Breast epithelium (tissue), 4 donors: ENCODE measurements at regions of chr9 and their contacts with region 1.

Region 1: GRCh38 chr9:119273984-119274665 is 95.1 kb downstream of the BRINP1 start:
- DNase-seq: no peak
- H3K4me3 ChIP-seq: no peak overlapping the region
- H3K27ac ChIP-seq: peak overlapping the region; percentile 8 to 52
- H3K4me1 ChIP-seq: peaks cover 0 to 8% of the 10 kb centered on the region in 2 donors
- H3K27me3 ChIP-seq: no peaks in the 10 kb centered on the region
- CTCF ChIP-seq: no peak
- POLR2A ChIP-seq: no peak

Region 2: DNA sequence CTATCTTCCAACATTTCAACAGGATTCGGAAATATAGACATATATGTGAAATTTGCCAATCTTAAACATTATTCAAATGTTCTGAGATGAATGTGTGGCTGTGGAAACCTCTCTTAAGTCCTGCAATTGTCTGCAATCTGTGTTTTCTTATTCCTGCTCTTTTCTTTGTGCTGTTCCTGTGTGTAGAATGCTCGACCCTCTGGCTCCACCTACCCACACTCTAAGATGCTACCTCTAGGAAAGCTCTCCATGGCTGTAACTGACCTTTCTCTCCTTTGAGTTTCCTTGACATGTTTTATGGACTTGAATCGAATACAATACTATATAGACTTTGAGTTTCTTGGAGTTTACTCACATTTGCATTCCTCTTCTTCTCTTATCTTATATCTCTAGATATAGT is 1738.7 kb before region 1 on chr9:
- intact Hi-C with region 1: loop called (anchors 10 kb)
- DNase-seq: no peak
- H3K4me3 ChIP-seq: no peak overlapping the region
- H3K27ac ChIP-seq: no peak overlapping the region
- H3K4me1 ChIP-seq: no peaks in the 10 kb centered on the region
- H3K27me3 ChIP-seq: no peaks in the 10 kb centered on the region
- CTCF ChIP-seq: no peak
- POLR2A ChIP-seq: no peak

Region 3: DNA sequence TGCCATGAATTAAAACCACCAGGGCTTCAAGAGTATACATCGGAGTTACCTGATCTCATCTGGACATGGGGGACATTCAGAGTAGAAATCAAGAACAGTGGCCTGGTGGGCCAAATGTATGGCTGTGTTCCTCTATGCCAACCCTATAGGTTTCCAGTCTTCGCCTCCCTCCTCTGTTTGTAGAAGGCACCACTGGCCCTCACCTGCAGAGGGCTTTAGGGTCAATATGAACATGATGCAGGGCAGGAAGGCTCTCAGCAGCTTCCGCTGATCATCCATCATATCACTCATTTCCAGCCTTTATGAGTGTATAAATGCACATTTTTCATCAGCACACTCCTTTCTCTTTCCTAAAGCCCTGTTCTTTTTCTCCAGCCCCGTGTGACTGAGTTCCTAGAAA is 650.6 kb after region 1 on chr9:
- intact Hi-C with region 1: no loop called
- DNase-seq: no peak
- H3K4me3 ChIP-seq: no peak overlapping the region
- H3K27ac ChIP-seq: no peak overlapping the region
- H3K4me1 ChIP-seq: no peaks in the 10 kb centered on the region
- H3K27me3 ChIP-seq: no peaks in the 10 kb centered on the region
- CTCF ChIP-seq: no peak
- POLR2A ChIP-seq: no peak